SK-N-SH (cell line): ENCODE measurements at regions of chrX and their contacts with region 1.

Region 1: DNA sequence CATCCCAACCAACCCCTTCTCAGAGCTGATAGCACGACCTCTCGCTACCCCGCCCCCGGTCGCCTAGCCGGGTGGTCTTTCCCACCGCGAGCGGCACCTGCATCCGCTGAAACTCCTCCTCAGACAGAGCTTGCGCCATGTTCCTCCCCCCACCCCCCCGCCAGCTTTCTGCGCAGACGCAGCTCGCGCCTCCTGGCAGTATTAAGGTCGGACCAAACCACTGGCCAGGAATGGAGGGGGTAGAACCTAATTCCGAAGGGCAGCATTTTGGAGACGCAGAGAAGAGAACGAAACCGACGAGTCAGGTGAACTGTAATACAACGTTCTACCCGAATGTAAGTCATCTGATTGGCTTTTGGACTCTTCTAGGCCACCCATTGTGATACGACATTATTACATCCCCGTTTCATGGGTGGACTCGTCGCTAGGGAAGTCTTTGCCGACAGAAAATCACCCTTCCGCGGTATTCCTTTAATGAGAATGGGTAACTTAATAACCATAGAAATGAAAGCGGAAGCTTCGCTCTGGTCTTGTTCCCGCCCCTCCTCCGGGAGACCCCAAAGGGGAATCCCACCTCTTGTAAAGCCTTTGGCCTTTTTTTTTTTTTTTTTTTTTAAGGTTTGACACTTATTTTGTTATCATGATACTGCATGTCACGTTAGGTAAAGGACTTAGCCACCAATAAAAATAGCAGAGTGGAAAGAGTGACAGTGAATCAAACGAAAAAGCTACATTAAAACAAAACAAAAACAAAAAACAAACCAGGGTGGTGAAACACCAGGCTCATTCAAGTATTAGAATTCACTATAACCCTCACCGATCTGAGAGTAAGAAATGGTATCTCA is at the start of gene GRIPAP1:
- DNase-seq: peak; percentile 90
- H3K4me3 ChIP-seq: peak within 1 kb of the TSS; percentile 75 to 80
- H3K27ac ChIP-seq: peak within 1 kb of the TSS; percentile 84 to 90
- H3K4me1 ChIP-seq: peaks cover 0 to 8% of the 10 kb centered on the region in 2 experiments; a peak in 2 of 4 replicates
- H3K27me3 ChIP-seq: no peaks in the 10 kb centered on the region; the same call in 1 of the 2 replicates
- CTCF ChIP-seq: no peak
- EP300 ChIP-seq: peak in 1 of 2 experiments; percentile 28; a peak in 1 of 4 replicates
- RAD21 ChIP-seq: no peak
- polyA plus RNA-seq, gene GRIPAP1: 63.6 and 66.9 TPM in 2 replicates

Region 2: GRCh38 chrX:48972220-48973167 is 29.8 kb before region 1 on chrX:
- CTCF ChIA-PET with region 1: interaction called, 10 read pairs
- POLR2A ChIA-PET with region 1: no interaction called
- DNase-seq: peak; percentile 70
- H3K4me3 ChIP-seq: peak overlapping the region; percentile 37 to 44; a peak in 3 of 4 replicates
- H3K27ac ChIP-seq: peak overlapping the region in 1 of 2 experiments; percentile 29; a peak in 1 of 4 replicates
- H3K4me1 ChIP-seq: peaks cover 0 to 12% of the 10 kb centered on the region in 2 experiments; a peak in 1 of 4 replicates
- H3K27me3 ChIP-seq: peaks cover 20% of the 10 kb centered on the region; the same call in 1 of the 2 replicates
- CTCF ChIP-seq: peak; percentile 70
- EP300 ChIP-seq: no peak
- RAD21 ChIP-seq: peak; percentile 32

Region 3: GRCh38 chrX:49029876-49030275 is 27.6 kb after region 1 on chrX:
- CTCF ChIA-PET with region 1: no interaction called
- POLR2A ChIA-PET with region 1: no interaction called
- DNase-seq: no peak
- H3K4me3 ChIP-seq: no peak overlapping the region
- H3K27ac ChIP-seq: no peak overlapping the region
- H3K4me1 ChIP-seq: no peaks in the 10 kb centered on the region
- H3K27me3 ChIP-seq: no peaks in the 10 kb centered on the region; the same call in 1 of the 2 replicates
- CTCF ChIP-seq: no peak
- EP300 ChIP-seq: no peak
- RAD21 ChIP-seq: no peak